H1 (cell line): ENCODE measurements at regions of chr2 and their contacts with region 1.

Region 1: DNA sequence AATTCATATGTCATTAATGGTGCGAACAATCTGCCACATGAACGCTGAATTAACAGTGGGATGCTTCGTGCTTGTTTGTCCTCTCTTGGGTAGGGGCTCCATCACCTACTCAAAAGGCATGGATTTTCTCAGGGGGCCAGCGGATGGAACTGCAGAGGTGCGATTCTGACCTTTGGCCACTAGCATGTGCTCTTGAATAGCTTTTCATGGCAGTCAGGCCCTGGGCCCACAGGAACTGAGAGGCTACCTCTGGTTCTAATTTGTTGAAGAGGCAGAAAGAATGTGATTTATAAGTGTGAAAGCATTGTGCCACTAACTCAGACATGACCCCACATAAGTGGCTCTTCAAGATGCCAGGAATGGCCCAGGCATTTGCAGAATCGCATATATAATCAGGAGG is 283.2 kb downstream of the INSIG2 start:
- DNase-seq: peak; percentile 38 to 62
- H3K4me3 ChIP-seq: no peak overlapping the region
- H3K27ac ChIP-seq: no peak overlapping the region
- H3K4me1 ChIP-seq: peaks cover 3 to 7% (median 5%) of the 10 kb centered on the region in 4 experiments; a peak in 4 of 7 replicates
- H3K27me3 ChIP-seq: peaks cover 0 to 3% (median 0%) of the 10 kb centered on the region in 4 experiments; a peak in 2 of 7 replicates
- CTCF ChIP-seq: peak; percentile 80 to 96 (median 82)
- EP300 ChIP-seq: no peak
- POLR2A ChIP-seq: no peak
- RAD21 ChIP-seq: peak; percentile 99

Region 2: GRCh38 chr2:118202707-118203303 is 168.7 kb before region 1 on chr2:
- CTCF ChIA-PET with region 1: no interaction called
- POLR2A ChIA-PET with region 1: no interaction called
- DNase-seq: peak in 1 of 2 experiments; percentile 77
- H3K4me3 ChIP-seq: no peak overlapping the region
- H3K27ac ChIP-seq: no peak overlapping the region
- H3K4me1 ChIP-seq: no peaks in the 10 kb centered on the region
- H3K27me3 ChIP-seq: peaks cover 0 to 3% (median 0%) of the 10 kb centered on the region in 4 experiments; a peak in 1 of 7 replicates
- CTCF ChIP-seq: peak; percentile 82 to 97 (median 88)
- EP300 ChIP-seq: no peak
- POLR2A ChIP-seq: no peak
- RAD21 ChIP-seq: peak; percentile 74 to 84

Region 3: DNA sequence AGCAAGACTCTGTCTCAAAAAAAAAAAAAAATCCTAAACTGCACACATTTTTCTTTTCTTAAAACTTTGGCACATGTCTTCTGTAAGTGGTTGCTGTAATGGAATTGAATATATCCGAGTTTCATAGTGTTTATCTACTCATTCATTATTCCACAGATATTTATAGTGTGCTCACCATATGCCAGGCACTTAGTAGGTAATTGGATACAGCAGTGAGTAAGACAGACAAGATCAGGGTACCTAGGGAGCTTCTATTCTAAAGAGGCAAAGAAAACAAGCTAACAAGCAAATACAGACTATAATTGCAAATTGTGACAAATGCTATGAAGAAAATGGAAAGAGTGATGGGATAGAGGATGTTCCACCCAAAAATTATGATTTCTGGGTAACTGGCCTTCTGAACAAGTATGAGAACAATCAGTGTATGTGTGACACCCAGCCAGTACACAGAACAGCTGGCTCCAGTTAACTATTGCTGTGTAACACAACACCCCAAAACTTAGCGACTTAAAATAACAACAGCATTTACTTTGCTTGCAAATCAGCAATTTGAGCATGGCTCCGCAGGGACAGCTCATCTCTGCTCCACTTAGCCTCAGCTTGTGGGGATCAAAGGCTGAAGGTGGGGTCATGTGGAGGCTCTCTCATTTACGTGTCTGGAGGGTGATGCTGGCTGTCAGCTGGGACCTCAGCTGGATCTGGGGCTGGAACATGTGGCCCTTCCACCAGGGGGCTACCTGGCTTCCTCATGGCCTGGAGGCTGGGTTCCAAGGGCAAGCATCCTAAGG is 58.4 kb before region 1 on chr2:
- CTCF ChIA-PET with region 1: interaction called, 13 read pairs
- POLR2A ChIA-PET with region 1: no interaction called
- DNase-seq: peak in 1 of 2 experiments; percentile 53
- H3K4me3 ChIP-seq: no peak overlapping the region
- H3K27ac ChIP-seq: no peak overlapping the region
- H3K4me1 ChIP-seq: peaks cover 7 to 28% (median 18%) of the 10 kb centered on the region in 4 experiments; a peak in 6 of 7 replicates
- H3K27me3 ChIP-seq: peaks cover 0 to 2% (median 0%) of the 10 kb centered on the region in 4 experiments; a peak in 3 of 7 replicates
- CTCF ChIP-seq: peak; percentile 29 to 57 (median 53); a peak in 2 of 4 replicates
- EP300 ChIP-seq: no peak
- POLR2A ChIP-seq: no peak
- RAD21 ChIP-seq: peak; percentile 34 to 59; a peak in 3 of 4 replicates